Dorsolateral prefrontal cortex (tissue), 120 donors: ENCODE measurements at regions of chr9 and their contacts with region 1.

Region 1: GRCh38 chr9:6353851-6354686 is 25.9 kb downstream of the TPD52L3 start:
- DNase-seq: peak in 1 of 10 donors; percentile 5
- H3K4me3 ChIP-seq: no peak overlapping the region
- H3K27ac ChIP-seq: no peak overlapping the region
- H3K27me3 ChIP-seq: no peaks in the 10 kb centered on the region
- CTCF ChIP-seq: peak; percentile 52 to 94 (median 86)

Region 2: GRCh38 chr9:6490863-6491262 is 136.8 kb after region 1 on chr9:
- intact Hi-C with region 1: loop called in 1 of 2 experiments (anchors 5 kb)
- DNase-seq: no peak
- H3K4me3 ChIP-seq: no peak overlapping the region
- H3K27ac ChIP-seq: no peak overlapping the region
- H3K27me3 ChIP-seq: no peaks in the 10 kb centered on the region
- CTCF ChIP-seq: no peak

Region 3: DNA sequence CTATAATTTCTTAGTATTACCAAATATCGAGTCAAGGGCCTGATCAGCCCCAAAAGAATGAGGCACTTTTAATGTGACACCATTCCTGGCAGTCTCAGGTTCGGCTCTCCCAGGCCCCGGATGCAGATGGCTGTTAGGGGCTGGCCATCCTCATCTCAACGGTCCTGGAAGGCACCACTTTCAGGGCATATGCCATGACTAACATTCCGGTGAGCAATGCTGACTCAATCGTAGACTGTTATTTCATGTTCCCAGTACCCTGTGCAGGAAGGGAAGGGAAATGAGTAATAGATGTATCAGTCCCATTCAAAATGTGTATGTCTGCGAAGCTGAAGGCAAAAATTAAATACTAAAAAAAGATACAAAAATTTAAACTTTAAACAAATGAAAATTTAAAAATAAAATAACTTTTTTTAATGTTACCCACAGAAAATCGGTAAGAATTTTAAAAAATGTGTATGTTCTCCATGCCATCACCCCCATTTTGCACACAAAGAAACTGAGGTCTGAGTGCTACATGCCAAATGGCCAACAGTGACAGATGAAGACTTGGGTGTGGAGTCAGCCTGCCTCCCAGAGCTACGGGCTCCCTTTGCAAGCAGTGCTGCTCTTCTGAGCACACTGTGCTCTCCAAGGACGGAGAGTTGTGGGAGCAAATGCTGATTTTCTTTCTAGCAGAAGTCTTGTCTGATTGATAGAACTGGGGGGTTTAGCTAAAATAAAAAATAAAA is 212.5 kb after region 1 on chr9:
- intact Hi-C with region 1: loop called (anchors 5 kb)
- DNase-seq: peak in 3 of 10 donors; percentile 26 to 57 (median 40)
- H3K4me3 ChIP-seq: peak overlapping the region in 23 of 59 donors; percentile 2 to 46 (median 17)
- H3K27ac ChIP-seq: peak overlapping the region in 57 of 59 donors; percentile 9 to 91 (median 77)
- H3K27me3 ChIP-seq: no peaks in the 10 kb centered on the region
- CTCF ChIP-seq: peak in 4 of 56 donors; percentile 5 to 20 (median 12)

Region 4: GRCh38 chr9:6667633-6668280 is 313.7 kb after region 1 on chr9:
- intact Hi-C with region 1: loop called (anchors 5 kb)
- DNase-seq: no peak
- H3K4me3 ChIP-seq: peak overlapping the region in 1 of 59 donors; percentile 16
- H3K27ac ChIP-seq: no peak overlapping the region
- H3K27me3 ChIP-seq: no peaks in the 10 kb centered on the region
- CTCF ChIP-seq: peak; percentile 40 to 79 (median 68)

Region 5: GRCh38 chr9:6681147-6681956 is 327.3 kb after region 1 on chr9:
- intact Hi-C with region 1: loop called in 1 of 2 experiments (anchors 5 kb)
- DNase-seq: peak; percentile 93 to 98 (median 95)
- H3K4me3 ChIP-seq: peak overlapping the region; percentile 51 to 95 (median 80)
- H3K27ac ChIP-seq: peak overlapping the region; percentile 92 to 100 (median 99)
- H3K27me3 ChIP-seq: no peaks in the 10 kb centered on the region
- CTCF ChIP-seq: peak in 35 of 56 donors; percentile 4 to 52 (median 22)

Region 6: GRCh38 chr9:6692433-6692832 is 338.4 kb after region 1 on chr9:
- intact Hi-C with region 1: no loop called
- DNase-seq: no peak
- H3K4me3 ChIP-seq: no peak overlapping the region
- H3K27ac ChIP-seq: peak overlapping the region in 2 of 59 donors; percentile 15 to 28
- H3K27me3 ChIP-seq: no peaks in the 10 kb centered on the region
- CTCF ChIP-seq: no peak